ENCODE measurements at regions of chr14 and their contacts with region 1.

Region 1: GRCh38 chr14:103520657-103521437 is 1.8 kb downstream of the CKB start:
- DNase-seq: peak; percentile 75
- ATAC-seq: peak; percentile 78
- H3K4me3 Mint-ChIP-seq: peak overlapping the region; percentile 70
- H3K27ac Mint-ChIP-seq: no peak overlapping the region
- H3K4me1 Mint-ChIP-seq: peaks cover 23% of the 10 kb centered on the region
- H3K27me3 Mint-ChIP-seq: no peaks in the 10 kb centered on the region
- CTCF ChIP-seq: no peak

Region 2: DNA sequence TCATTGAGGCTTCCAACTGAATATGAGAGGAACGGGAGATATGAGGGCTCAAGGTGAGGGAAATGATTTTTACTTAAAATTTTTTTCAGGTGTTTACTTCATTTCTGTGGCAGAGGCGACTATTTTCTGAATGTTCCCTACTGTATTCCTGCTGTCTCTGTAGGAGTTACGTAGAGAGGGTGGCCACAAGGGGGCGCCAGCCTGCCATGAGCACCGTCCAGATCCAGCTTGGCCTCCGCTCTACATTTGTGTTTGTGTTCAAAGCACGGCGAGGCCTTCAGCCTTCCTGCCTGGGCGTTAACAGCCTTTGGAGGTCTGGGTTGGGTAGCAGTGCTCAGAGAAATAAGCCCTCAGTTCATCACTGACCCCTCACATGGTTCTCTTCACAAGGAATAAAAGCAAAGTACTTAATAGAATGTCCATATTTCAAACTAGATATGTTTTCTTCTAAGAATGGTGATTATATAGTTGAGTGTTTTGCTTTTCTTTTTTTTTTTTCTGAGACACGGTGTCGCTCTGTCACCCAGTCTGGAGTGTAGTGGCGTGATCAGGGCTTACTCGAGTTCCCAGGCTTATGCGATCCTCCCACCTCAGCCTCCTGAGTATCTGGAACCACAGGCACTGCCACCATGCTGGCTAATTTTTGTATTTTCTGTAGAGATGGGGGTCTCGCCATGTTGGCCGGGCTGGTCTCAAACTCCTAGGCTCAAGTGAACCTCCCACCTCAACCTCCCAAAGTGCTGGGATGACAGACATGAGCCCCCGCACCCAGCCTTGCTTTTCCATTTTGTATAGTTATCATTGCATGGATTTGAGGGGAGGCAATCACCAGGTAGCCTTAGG is 20.5 kb before region 1 on chr14:
- CTCF ChIA-PET with region 1: interaction called, 7 read pairs
- POLR2A ChIA-PET with region 1: no interaction called
- intact Hi-C with region 1: loop called (anchors 1 kb)
- DNase-seq: peak; percentile 60
- ATAC-seq: peak; percentile 82
- H3K4me3 Mint-ChIP-seq: no peak overlapping the region
- H3K27ac Mint-ChIP-seq: no peak overlapping the region
- H3K4me1 Mint-ChIP-seq: peaks cover 8% of the 10 kb centered on the region
- H3K27me3 Mint-ChIP-seq: no peaks in the 10 kb centered on the region
- CTCF ChIP-seq: peak; percentile 49

Region 3: DNA sequence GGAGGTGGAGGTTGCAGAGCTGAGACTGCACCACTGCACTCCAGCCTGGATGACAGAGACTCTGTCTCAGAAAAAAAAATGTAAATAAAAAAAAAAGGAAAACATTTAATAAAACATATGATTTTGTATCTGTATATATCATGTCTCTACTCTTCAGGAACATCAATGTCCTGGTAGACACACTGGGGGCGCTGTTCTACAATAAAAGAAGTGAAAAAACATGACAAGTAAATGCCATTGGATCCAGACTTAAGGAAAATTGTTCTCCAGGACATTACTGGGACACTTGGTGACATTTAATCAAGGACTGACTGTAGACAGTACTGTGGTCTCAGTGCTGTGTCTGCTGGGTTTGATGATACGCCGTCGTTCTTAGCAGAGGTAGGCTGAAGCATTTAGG is 92.7 kb after region 1 on chr14:
- CTCF ChIA-PET with region 1: no interaction called
- POLR2A ChIA-PET with region 1: no interaction called
- intact Hi-C with region 1: no loop called
- DNase-seq: no peak
- ATAC-seq: no peak
- H3K4me3 Mint-ChIP-seq: no peak overlapping the region
- H3K27ac Mint-ChIP-seq: no peak overlapping the region
- H3K4me1 Mint-ChIP-seq: no peaks in the 10 kb centered on the region
- H3K27me3 Mint-ChIP-seq: peaks cover 2% of the 10 kb centered on the region
- CTCF ChIP-seq: no peak

Measured in activated B cell treated with CpG ODN at 0.5 μM for 24 hours (primary cell).